ENCODE measurements at regions of chr16 and their contacts with region 1.

Region 1: GRCh38 chr16:27313422-27314160 is at the start of gene IL4R:
- DNase-seq: peak; percentile 96
- total RNA-seq, gene IL4R: 99.2 to 112 TPM

Region 2: DNA sequence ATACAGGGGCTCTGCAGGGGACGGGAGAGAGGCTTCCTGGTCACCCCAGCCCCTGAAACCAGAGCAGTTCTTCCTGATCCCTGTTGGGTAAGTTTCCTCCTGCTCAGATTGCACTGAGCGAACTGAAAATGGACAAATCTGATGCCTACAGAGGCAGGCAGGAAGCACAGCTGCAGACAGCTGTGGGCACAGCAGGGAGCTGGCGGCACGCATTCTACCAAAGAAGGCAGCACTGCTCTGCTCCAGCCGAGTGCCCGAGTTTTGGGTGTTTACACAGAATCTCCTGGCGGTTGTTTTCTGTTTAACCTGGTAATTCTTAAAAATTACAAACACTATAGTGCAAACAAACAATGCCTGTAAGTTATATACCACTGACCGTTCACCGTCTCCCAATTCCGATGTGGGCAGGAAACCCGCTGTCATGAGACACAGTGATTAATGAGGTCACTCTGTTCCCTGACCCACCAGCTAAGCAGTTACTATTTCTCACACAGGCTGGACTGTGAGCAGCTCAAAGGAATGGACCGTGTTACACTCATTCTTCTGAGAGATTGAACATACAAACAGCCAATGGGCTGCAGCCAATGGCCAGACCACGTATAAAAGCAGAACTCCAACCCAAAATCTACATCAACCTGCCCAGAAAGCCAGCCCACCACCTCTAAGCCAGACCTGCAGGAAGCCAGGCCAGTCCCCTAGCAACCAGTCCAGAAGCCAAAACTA is 70.6 kb before region 1 on chr16:
- intact Hi-C with region 1: loop called (anchors 5 to 10 kb)
- DNase-seq: peak; percentile 80

Measured in posterior vena cava (tissue), 2 donors.